ENCODE measurements at regions of chr15 and their contacts with region 1.

Region 1: DNA sequence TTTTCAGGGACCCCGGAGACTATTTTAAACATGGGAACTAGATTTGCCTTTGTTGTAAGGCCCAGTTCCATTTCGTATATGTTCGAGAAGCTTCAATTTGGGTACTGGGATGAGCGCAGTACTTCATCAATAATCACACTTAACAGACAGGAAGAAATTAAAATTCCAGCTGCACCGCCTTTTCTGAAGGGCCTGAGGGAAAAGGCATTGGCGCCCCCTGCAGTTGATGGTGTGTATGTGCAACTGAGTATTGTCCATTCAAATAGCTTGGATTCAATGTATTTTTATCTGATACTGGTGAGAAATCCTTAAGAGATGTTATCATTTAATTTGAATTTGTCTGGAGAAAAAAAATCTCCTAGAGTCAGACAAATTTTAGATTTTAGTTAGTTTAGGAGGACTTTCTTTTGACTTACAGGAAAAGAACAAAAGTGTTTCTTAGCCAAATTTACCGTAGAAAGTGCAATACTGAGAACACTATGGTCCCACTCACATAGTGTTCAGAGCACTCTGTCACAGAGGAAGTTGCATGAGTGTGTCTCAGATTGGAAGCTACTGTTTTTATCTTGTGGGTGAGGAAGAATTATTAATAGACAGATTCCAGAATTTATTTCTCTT is 5.4 kb upstream of the ALDH1A2 start:
- DNase-seq: peak in 1 of 2 experiments; percentile 57
- H3K4me3 ChIP-seq: no peak overlapping the region
- H3K27ac ChIP-seq: no peak overlapping the region
- H3K4me1 ChIP-seq: no peaks in the 10 kb centered on the region
- H3K27me3 ChIP-seq: no peaks in the 10 kb centered on the region
- CTCF ChIP-seq: peak; percentile 86

Region 2: DNA sequence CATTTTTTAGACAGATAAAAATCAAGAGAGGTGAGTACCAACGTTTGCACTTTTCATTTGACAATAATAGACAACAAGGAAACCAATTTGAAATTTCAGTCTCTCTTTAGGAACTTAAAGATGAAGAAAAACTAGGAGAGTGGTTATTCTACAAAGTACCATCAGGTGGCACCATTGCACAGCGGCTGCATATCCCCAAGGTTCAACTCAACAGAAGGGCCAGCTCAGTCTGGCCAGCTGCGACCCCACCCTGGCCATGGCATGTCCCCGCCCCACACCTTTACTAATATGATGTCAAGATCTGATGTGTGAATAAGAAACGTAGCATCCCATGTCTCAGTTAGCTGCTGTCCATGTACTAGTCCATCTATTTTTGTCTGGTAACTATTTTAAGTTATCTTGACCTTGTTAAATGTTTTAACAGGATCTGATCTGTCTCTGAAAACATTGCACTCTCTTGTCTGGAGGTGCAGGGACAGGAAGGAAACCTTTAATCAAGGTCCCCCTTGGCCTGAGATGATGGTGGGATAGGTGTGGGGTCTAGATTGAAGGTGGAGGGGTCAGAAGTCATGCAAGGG is 730.1 kb before region 1 on chr15:
- CTCF ChIA-PET with region 1: no interaction called
- POLR2A ChIA-PET with region 1: no interaction called
- intact Hi-C with region 1: loop called (anchors 2 kb)
- DNase-seq: peak; percentile 46 to 50
- H3K4me3 ChIP-seq: no peak overlapping the region
- H3K27ac ChIP-seq: no peak overlapping the region
- H3K4me1 ChIP-seq: no peaks in the 10 kb centered on the region
- H3K27me3 ChIP-seq: no peaks in the 10 kb centered on the region
- CTCF ChIP-seq: peak; percentile 87

Region 3: DNA sequence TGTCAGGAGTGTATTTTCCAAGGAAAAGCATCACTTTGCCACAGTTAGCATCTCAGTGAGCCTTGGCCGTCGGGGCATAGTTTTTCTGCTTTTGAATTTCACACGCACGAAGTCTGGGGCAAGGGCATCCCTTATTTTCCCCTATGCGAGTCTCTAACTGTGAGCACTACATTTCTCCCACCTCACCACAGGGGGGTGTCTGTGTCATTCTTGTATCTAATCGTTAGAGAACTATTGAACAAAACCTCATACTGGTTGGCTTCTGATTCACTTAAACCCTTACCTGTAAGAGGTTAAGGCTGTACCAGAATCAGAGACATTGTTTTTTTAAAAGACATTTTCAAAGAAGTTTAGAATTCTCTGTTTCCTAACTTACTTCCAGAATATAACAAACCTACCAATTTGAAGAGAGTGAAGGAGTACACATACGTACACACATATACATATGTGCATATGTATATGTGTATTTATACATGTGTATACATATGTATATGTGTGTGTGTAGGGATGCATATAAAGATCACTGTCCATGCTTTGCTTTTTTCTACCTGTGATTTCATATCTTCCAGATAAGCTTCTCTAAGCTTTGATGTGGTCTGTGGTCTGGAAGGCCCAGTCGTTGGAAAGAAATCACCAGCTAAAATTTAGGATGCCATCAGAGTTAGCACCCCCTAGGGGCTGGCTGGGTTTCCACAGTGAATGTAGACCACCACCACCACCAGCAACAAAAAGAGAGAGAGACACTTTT is 429.8 kb before region 1 on chr15:
- CTCF ChIA-PET with region 1: no interaction called
- POLR2A ChIA-PET with region 1: no interaction called
- intact Hi-C with region 1: loop called (anchors 10 kb)
- DNase-seq: peak in 1 of 2 experiments; percentile 2
- H3K4me3 ChIP-seq: no peak overlapping the region
- H3K27ac ChIP-seq: no peak overlapping the region
- H3K4me1 ChIP-seq: no peaks in the 10 kb centered on the region
- H3K27me3 ChIP-seq: no peaks in the 10 kb centered on the region
- CTCF ChIP-seq: peak; percentile 40; the same call in 1 of the 2 replicates

Region 4: DNA sequence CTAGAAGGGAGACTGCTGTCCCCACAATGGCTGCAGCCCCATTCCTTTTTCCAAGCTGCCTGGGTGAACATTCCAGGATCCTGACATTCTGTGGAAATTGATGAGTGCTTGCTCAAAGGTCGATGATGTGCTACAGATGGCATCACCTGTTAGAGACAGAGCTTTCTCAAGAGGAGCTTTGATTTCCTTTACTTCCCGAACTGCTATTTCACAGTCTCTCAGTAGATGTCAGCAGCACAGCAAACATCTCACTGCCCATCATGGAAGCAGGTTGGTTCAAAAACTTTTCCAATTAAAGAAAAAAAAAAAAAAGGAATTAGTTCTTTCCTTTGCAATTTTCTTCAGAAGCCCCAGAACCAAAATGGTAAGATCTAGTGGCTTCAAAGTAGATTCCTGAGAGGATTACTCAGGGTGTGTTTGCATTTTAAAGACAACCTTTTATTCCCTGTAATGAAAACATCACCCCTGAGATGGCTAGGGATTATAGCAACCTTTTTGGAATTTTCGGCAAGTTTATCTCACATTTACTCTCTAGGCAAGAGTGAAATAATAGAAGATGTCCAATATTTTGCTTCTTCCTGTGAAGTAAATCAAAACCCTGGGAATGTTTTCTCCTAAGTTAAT is 319.6 kb before region 1 on chr15:
- CTCF ChIA-PET with region 1: interaction called, 26 read pairs
- POLR2A ChIA-PET with region 1: no interaction called
- intact Hi-C with region 1: loop called (anchors 5 kb)
- DNase-seq: no peak
- H3K4me3 ChIP-seq: no peak overlapping the region
- H3K27ac ChIP-seq: no peak overlapping the region
- H3K4me1 ChIP-seq: no peaks in the 10 kb centered on the region
- H3K27me3 ChIP-seq: no peaks in the 10 kb centered on the region
- CTCF ChIP-seq: peak; percentile 56

Region 5: GRCh38 chr15:57770495-57770894 is 300.4 kb before region 1 on chr15:
- CTCF ChIA-PET with region 1: interaction called, 10 read pairs
- POLR2A ChIA-PET with region 1: no interaction called
- intact Hi-C with region 1: no loop called
- DNase-seq: no peak
- H3K4me3 ChIP-seq: no peak overlapping the region
- H3K27ac ChIP-seq: no peak overlapping the region
- H3K4me1 ChIP-seq: no peaks in the 10 kb centered on the region
- H3K27me3 ChIP-seq: no peaks in the 10 kb centered on the region
- CTCF ChIP-seq: no peak

Region 6: DNA sequence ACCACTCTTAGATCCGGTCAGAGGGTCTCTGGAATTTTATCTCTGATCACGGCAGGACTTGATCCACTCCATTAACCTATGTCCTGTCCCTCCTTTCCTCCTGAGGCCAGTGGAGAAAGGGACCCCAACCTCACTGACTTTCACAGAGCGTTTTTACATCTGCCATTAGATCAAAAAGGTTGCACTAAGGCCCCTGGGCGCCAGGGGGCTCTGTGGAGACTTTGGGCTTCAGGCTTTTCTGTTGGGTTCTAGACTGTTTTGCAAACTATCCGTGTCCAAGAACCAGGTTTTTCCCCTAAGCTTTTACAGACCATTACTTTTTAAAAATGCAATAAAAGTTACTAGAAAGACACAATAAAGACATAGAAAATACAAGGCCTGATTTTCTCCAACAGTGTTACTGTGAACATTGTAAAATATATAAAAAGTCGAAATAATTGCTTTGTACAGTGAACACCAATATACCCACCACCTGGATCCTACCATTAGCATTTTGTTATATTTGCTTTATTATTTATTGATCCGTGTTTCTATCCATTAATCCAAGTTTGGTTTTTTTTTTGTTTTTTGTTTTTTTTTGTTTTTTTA is 204.7 kb before region 1 on chr15:
- CTCF ChIA-PET with region 1: interaction called, 5 read pairs
- POLR2A ChIA-PET with region 1: interaction called, 4 read pairs
- intact Hi-C with region 1: loop called (anchors 5 kb)
- DNase-seq: peak in 1 of 2 experiments; percentile 35
- H3K4me3 ChIP-seq: no peak overlapping the region
- H3K27ac ChIP-seq: no peak overlapping the region
- H3K4me1 ChIP-seq: no peaks in the 10 kb centered on the region
- H3K27me3 ChIP-seq: no peaks in the 10 kb centered on the region
- CTCF ChIP-seq: peak; percentile 74; the same call in 1 of the 2 replicates

Region 7: DNA sequence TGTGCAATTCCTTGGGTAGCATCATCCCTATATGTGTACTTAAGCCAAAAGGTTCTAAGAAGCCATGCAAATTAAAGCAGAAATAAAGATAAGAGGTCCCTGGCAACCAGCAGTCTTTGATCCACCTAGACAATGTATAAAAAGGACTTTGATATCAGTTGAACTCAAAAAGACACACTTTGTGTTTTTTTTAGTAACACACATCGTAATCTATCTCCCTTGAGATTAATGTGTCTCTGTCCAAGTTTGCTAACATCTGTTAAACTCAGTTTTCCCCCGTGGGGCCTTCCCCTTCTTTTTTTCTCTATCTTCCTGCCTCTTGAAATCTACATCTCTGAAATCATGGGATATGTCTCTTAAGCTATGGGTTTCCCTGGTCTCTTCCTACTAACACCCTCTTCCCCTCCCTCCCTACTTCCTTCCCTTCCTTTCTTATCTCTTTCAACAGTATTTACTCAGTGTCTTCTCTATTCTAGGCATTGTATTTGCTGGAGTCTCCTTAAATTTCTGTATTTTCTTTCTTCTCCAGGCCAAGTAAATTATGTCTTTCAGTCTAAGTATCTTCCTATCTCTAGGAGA is 33.1 kb before region 1 on chr15:
- CTCF ChIA-PET with region 1: no interaction called
- POLR2A ChIA-PET with region 1: no interaction called
- intact Hi-C with region 1: no loop called
- DNase-seq: no peak
- H3K4me3 ChIP-seq: no peak overlapping the region
- H3K27ac ChIP-seq: no peak overlapping the region
- H3K4me1 ChIP-seq: no peaks in the 10 kb centered on the region
- H3K27me3 ChIP-seq: no peaks in the 10 kb centered on the region
- CTCF ChIP-seq: no peak